CD4-positive, alpha-beta memory T cell (primary cell): ENCODE measurements at regions of chr14 and their contacts with region 1.

Region 1: GRCh38 chr14:35121887-35122695 is at the starts of genes PPP2R3C and PRORP:
- DNase-seq: peak; percentile 93 to 97 (median 95)
- H3K4me3 ChIP-seq: peak within 1 kb of the TSS; percentile 94 to 99
- H3K4me3 Mint-ChIP-seq: peak within 1 kb of the TSS; percentile 97 to 100 (median 98)
- H3K27ac ChIP-seq: peak within 1 kb of the TSS; percentile 99
- H3K27ac Mint-ChIP-seq: peak within 1 kb of the TSS; percentile 99 to 100 (median 100)
- H3K4me1 ChIP-seq: peaks cover 72% of the 10 kb centered on the region
- H3K4me1 Mint-ChIP-seq: peaks cover 42 to 86% (median 64%) of the 10 kb centered on the region in 4 donors
- H3K27me3 ChIP-seq: no peaks in the 10 kb centered on the region
- H3K27me3 Mint-ChIP-seq: no peaks in the 10 kb centered on the region
- total RNA-seq, gene PPP2R3C: 36.1 to 41.0 TPM
- total RNA-seq, gene PRORP: 38.9 to 39.4 TPM

Region 2: DNA sequence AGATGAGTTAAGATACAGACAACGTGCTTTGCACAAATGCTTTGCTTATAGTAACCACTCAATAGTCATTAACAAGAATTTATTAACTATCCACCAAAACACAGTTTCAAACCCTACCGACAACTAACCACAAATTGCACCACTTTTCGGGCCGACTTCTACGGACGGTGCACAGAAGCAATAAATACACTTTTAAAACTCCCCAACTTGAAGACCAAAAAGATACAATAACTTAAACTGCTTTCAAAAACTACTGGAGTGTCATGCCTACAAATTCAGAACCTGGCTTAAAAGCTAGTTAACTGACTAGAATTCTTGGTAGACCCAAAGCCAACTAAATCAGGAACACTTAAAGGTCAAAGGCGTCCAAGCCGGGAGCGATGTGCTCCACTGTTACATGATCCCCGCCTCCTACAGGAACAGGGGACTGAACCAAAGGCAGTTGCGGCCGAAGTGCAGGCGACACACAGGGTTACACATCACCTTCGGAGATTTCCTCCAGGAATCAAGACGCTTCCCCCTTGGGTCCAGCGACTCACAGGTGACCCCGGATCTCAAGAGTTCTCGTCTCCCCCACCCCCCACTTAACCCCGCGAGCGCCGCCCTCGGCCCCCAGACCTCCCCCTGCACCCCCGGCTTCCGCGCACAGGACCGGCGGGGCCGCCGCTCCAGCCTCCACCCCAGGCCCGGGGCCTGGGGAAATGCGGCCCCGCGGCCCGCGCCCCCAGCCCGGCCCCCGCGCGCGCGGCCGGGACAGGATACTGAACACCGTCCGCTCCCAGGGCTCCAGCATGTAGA is 660.6 kb before region 1 on chr14:
- CTCF ChIA-PET with region 1: no interaction called
- POLR2A ChIA-PET with region 1: no interaction called
- intact Hi-C with region 1: loop called (anchors 2 kb)
- DNase-seq: peak in 4 of 5 donors; percentile 8 to 44 (median 14)
- H3K4me3 ChIP-seq: peak overlapping the region; percentile 43 to 51
- H3K4me3 Mint-ChIP-seq: peak overlapping the region; percentile 90 to 95 (median 94)
- H3K27ac ChIP-seq: peak overlapping the region; percentile 59
- H3K27ac Mint-ChIP-seq: peak overlapping the region; percentile 73 to 98 (median 94)
- H3K4me1 ChIP-seq: peaks cover 20% of the 10 kb centered on the region
- H3K4me1 Mint-ChIP-seq: peaks cover 11 to 20% (median 16%) of the 10 kb centered on the region in 4 donors
- H3K27me3 ChIP-seq: no peaks in the 10 kb centered on the region
- H3K27me3 Mint-ChIP-seq: no peaks in the 10 kb centered on the region

Region 3: GRCh38 chr14:34875031-34875922 is 246.8 kb before region 1 on chr14 and contains the start of gene BAZ1A:
- CTCF ChIA-PET with region 1: no interaction called
- POLR2A ChIA-PET with region 1: interaction called, 4 read pairs
- intact Hi-C with region 1: loop called (anchors 5 kb)
- DNase-seq: peak; percentile 53 to 67 (median 57)
- H3K4me3 ChIP-seq: peak within 1 kb of the TSS; percentile 64 to 98
- H3K4me3 Mint-ChIP-seq: peak within 1 kb of the TSS; percentile 95 to 100 (median 100)
- H3K27ac ChIP-seq: peak within 1 kb of the TSS; percentile 100
- H3K27ac Mint-ChIP-seq: peak within 1 kb of the TSS; percentile 98 to 100 (median 99)
- H3K4me1 ChIP-seq: peaks cover 38% of the 10 kb centered on the region
- H3K4me1 Mint-ChIP-seq: peaks cover 17 to 48% (median 33%) of the 10 kb centered on the region in 4 donors
- H3K27me3 ChIP-seq: no peaks in the 10 kb centered on the region
- H3K27me3 Mint-ChIP-seq: no peaks in the 10 kb centered on the region
- total RNA-seq, gene BAZ1A: 54.1 to 56.4 TPM

Region 4: GRCh38 chr14:35046048-35046741 is 75.9 kb before region 1 on chr14 and contains the start of gene FAM177A1:
- CTCF ChIA-PET with region 1: no interaction called
- POLR2A ChIA-PET with region 1: interaction called, 58 read pairs
- intact Hi-C with region 1: loop called (anchors 1 kb)
- DNase-seq: peak; percentile 98 to 100 (median 99)
- H3K4me3 ChIP-seq: peak within 1 kb of the TSS; percentile 76 to 92
- H3K4me3 Mint-ChIP-seq: peak within 1 kb of the TSS; percentile 87 to 100 (median 96)
- H3K27ac ChIP-seq: peak within 1 kb of the TSS; percentile 98
- H3K27ac Mint-ChIP-seq: peak within 1 kb of the TSS; percentile 95 to 100 (median 99)
- H3K4me1 ChIP-seq: peaks cover 24% of the 10 kb centered on the region
- H3K4me1 Mint-ChIP-seq: peaks cover 19 to 38% (median 30%) of the 10 kb centered on the region in 4 donors
- H3K27me3 ChIP-seq: no peaks in the 10 kb centered on the region
- H3K27me3 Mint-ChIP-seq: no peaks in the 10 kb centered on the region
- total RNA-seq, gene FAM177A1: 35.2 to 41.5 TPM

Region 5: DNA sequence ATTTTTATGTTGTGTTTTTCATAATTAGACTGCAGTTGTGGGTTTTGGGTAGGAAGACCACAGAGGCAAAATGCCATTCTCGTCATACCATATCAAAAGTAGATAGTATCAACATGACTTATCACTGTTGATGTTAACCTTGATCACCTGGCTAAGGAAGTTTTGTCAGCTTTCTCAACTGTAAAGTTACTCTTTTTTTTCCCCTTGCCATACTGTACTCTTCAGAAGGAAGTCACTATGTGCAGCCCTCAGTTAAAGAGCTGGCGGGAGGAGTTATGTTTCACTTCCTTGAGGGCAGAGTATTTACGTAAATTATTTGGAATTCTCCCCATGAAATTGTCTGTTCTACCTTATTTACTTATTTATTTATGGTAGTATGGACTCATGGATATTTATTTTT is 79.0 kb after region 1 on chr14:
- CTCF ChIA-PET with region 1: no interaction called
- POLR2A ChIA-PET with region 1: interaction called, 14 read pairs
- intact Hi-C with region 1: loop called (anchors 1 kb)
- DNase-seq: peak in 4 of 5 donors; percentile 22 to 40 (median 28)
- H3K4me3 ChIP-seq: no peak overlapping the region
- H3K4me3 Mint-ChIP-seq: peak overlapping the region in 6 of 8 donors; percentile 29 to 78 (median 61)
- H3K27ac ChIP-seq: peak overlapping the region; percentile 15
- H3K27ac Mint-ChIP-seq: peak overlapping the region; percentile 44 to 89 (median 70)
- H3K4me1 ChIP-seq: peaks cover 63% of the 10 kb centered on the region
- H3K4me1 Mint-ChIP-seq: peaks cover 28 to 57% (median 45%) of the 10 kb centered on the region in 4 donors
- H3K27me3 ChIP-seq: no peaks in the 10 kb centered on the region
- H3K27me3 Mint-ChIP-seq: no peaks in the 10 kb centered on the region

Region 6: DNA sequence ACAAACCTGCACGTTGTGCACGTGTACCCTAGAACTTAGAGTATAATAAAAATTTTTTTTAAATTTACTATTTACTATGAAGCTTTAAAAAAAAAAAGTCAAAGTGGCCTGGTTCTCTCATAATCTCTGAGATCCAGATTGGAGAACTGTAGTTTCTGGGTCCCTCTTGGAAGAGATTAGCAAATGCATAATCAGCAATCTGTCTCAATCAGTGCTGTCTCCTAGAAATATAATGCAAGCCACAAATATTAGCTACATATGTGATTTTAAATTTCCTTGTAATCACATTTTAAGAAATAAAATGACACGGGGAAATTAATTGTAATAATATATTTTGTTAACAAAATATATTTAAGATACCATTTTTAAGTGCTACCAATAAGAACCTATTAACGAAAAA is 654.7 kb after region 1 on chr14:
- CTCF ChIA-PET with region 1: no interaction called
- POLR2A ChIA-PET with region 1: no interaction called
- intact Hi-C with region 1: no loop called
- DNase-seq: no peak
- H3K4me3 ChIP-seq: no peak overlapping the region
- H3K4me3 Mint-ChIP-seq: no peak overlapping the region
- H3K27ac ChIP-seq: no peak overlapping the region
- H3K27ac Mint-ChIP-seq: peak overlapping the region in 1 of 7 donors; percentile 58
- H3K4me1 ChIP-seq: no peaks in the 10 kb centered on the region
- H3K4me1 Mint-ChIP-seq: peaks cover 4 to 18% (median 12%) of the 10 kb centered on the region in 4 donors
- H3K27me3 ChIP-seq: no peaks in the 10 kb centered on the region
- H3K27me3 Mint-ChIP-seq: no peaks in the 10 kb centered on the region

Region 7: GRCh38 chr14:35808076-35808652 is 686.1 kb after region 1 on chr14:
- CTCF ChIA-PET with region 1: no interaction called
- POLR2A ChIA-PET with region 1: no interaction called
- intact Hi-C with region 1: loop called (anchors 5 kb)
- DNase-seq: peak in 3 of 5 donors; percentile 4 to 57 (median 11)
- H3K4me3 ChIP-seq: peak overlapping the region; percentile 45 to 81
- H3K4me3 Mint-ChIP-seq: peak overlapping the region; percentile 94 to 99 (median 98)
- H3K27ac ChIP-seq: peak overlapping the region; percentile 84
- H3K27ac Mint-ChIP-seq: peak overlapping the region; percentile 89 to 99 (median 98)
- H3K4me1 ChIP-seq: peaks cover 23% of the 10 kb centered on the region
- H3K4me1 Mint-ChIP-seq: peaks cover 19 to 47% (median 34%) of the 10 kb centered on the region in 4 donors
- H3K27me3 ChIP-seq: no peaks in the 10 kb centered on the region
- H3K27me3 Mint-ChIP-seq: no peaks in the 10 kb centered on the region